ENCODE measurements at regions of chr9 and their contacts with region 1.

Region 1: GRCh38 chr9:34500623-34501267 is 22.0 kb downstream of the ENHO start:
- DNase-seq: peak; percentile 78
- ATAC-seq: peak; percentile 86
- H3K4me3 ChIP-seq: no peak overlapping the region
- H3K4me3 Mint-ChIP-seq: no peak overlapping the region
- H3K27ac ChIP-seq: no peak overlapping the region
- H3K27ac Mint-ChIP-seq: no peak overlapping the region
- H3K4me1 ChIP-seq: peaks cover 0 to 3% of the 10 kb centered on the region in 2 donors
- H3K4me1 Mint-ChIP-seq: no peaks in the 10 kb centered on the region
- H3K27me3 ChIP-seq: peaks cover 0 to 10% (median 3%) of the 10 kb centered on the region in 4 experiments
- H3K27me3 Mint-ChIP-seq: peaks cover 38% of the 10 kb centered on the region
- CTCF ChIP-seq: peak; percentile 98

Region 2: DNA sequence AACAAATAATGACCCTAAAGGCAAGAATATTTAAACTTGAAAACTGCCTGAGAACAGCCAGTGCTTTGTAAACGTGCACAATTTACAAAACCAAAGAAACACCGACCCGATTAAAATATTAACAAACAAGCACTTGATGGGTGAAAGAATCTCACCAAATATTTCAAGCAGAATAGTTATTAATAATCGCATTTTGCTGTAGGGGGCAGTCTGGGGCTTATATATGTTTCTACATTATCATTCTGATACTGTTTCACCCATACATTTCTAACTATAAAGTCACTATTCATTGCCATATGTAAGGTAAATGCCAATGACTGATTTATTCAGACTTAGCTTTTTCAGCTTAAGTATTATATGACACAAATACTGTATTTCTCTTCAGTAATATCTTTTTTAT is 489.8 kb before region 1 on chr9:
- CTCF ChIA-PET with region 1: interaction called, 3 read pairs
- POLR2A ChIA-PET with region 1: no interaction called
- intact Hi-C with region 1: loop called (anchors 5 kb)
- DNase-seq: peak; percentile 50
- ATAC-seq: no peak
- H3K4me3 ChIP-seq: no peak overlapping the region
- H3K4me3 Mint-ChIP-seq: no peak overlapping the region
- H3K27ac ChIP-seq: no peak overlapping the region
- H3K27ac Mint-ChIP-seq: no peak overlapping the region
- H3K4me1 ChIP-seq: no peaks in the 10 kb centered on the region
- H3K4me1 Mint-ChIP-seq: no peaks in the 10 kb centered on the region
- H3K27me3 ChIP-seq: no peaks in the 10 kb centered on the region
- H3K27me3 Mint-ChIP-seq: no peaks in the 10 kb centered on the region
- CTCF ChIP-seq: peak; percentile 74

Region 3: DNA sequence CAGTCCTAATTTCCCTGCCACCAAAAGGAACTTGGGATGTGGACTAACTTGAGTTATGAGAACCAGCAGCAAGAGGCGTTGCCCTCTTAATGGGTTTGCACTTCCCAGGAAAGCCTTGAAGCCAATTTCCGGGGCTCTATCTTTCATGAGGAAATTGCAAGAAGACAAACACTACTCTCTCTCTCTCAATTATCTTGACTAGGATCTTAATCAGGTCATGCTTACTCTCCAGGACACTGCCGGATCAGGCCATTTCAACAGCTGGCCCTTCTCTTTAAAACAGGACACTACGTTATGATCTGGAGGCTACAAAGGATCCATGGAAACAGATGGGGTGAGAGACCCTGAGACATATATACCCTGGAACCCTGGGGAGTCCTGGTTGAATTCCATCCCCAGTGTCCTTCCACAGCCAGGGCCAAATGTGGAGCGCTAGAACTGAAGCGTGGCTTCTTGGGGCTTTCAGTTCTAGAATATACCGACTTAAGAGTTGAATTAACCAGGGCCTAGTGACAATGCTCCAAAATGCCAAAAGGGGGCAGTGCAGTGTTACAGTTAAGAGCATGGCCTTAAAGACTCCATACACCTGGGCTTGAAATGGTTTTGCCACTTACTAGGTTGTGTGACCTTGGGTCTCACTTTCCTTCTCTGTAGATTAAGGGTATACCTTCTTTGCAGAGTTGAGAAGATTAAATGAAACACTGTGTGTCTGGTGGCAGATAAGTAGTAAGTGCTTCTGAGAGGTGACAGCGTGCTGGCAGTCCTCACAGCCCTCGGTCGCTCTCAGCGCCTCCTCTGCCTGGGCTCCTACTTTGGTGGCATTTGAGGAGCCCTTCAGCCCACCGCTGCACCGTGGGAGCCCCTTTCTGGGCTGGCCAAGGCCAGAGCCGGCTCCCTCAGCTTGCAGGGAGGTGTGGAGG is 63.5 kb before region 1 on chr9:
- CTCF ChIA-PET with region 1: interaction called, 37 read pairs
- POLR2A ChIA-PET with region 1: no interaction called
- intact Hi-C with region 1: loop called (anchors 1 kb)
- DNase-seq: peak; percentile 81
- ATAC-seq: peak; percentile 65
- H3K4me3 ChIP-seq: no peak overlapping the region
- H3K4me3 Mint-ChIP-seq: no peak overlapping the region
- H3K27ac ChIP-seq: no peak overlapping the region
- H3K27ac Mint-ChIP-seq: no peak overlapping the region
- H3K4me1 ChIP-seq: no peaks in the 10 kb centered on the region
- H3K4me1 Mint-ChIP-seq: no peaks in the 10 kb centered on the region
- H3K27me3 ChIP-seq: no peaks in the 10 kb centered on the region
- H3K27me3 Mint-ChIP-seq: no peaks in the 10 kb centered on the region
- CTCF ChIP-seq: peak; percentile 82

Region 4: DNA sequence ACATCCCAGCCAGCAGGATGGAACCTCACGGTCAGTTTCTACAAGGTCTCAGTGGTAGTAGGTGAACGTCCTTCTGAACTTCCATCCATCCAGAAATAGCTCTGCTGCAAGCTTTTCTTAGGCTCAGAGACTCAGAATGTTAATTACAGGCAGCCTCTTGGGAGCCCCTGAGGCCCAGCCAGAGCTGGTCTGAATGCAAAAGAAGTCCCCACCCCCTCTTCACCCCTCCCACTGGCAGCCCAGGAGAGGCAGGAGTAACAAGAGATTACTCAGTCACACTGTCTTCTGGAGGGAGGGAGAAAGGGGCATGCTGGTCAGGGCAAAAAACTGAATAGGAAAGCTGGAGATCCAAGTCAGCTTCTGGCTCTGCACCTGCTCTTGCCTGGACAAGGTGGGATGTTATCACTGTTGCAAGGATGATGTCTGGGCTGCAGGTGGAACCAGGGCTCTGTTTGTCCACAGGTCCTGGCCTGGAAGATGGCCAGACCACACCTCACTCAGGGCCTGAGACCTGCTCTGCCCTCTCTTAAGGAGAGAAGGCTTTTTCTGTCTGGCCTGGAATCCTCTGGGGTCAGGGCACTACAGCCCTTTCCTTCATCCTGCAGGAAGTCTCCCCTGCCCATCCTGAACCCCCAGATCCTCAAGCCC is 12.9 kb after region 1 on chr9:
- CTCF ChIA-PET with region 1: interaction called, 14 read pairs
- POLR2A ChIA-PET with region 1: no interaction called
- intact Hi-C with region 1: no loop called
- DNase-seq: no peak
- ATAC-seq: no peak
- H3K4me3 ChIP-seq: no peak overlapping the region
- H3K4me3 Mint-ChIP-seq: no peak overlapping the region
- H3K27ac ChIP-seq: no peak overlapping the region
- H3K27ac Mint-ChIP-seq: no peak overlapping the region
- H3K4me1 ChIP-seq: no peaks in the 10 kb centered on the region
- H3K4me1 Mint-ChIP-seq: no peaks in the 10 kb centered on the region
- H3K27me3 ChIP-seq: peaks cover 0 to 3% (median 0%) of the 10 kb centered on the region in 4 experiments
- H3K27me3 Mint-ChIP-seq: peaks cover 15% of the 10 kb centered on the region
- CTCF ChIP-seq: no peak